ENCODE measurements at regions of chr18 and their contacts with region 1.

Region 1: DNA sequence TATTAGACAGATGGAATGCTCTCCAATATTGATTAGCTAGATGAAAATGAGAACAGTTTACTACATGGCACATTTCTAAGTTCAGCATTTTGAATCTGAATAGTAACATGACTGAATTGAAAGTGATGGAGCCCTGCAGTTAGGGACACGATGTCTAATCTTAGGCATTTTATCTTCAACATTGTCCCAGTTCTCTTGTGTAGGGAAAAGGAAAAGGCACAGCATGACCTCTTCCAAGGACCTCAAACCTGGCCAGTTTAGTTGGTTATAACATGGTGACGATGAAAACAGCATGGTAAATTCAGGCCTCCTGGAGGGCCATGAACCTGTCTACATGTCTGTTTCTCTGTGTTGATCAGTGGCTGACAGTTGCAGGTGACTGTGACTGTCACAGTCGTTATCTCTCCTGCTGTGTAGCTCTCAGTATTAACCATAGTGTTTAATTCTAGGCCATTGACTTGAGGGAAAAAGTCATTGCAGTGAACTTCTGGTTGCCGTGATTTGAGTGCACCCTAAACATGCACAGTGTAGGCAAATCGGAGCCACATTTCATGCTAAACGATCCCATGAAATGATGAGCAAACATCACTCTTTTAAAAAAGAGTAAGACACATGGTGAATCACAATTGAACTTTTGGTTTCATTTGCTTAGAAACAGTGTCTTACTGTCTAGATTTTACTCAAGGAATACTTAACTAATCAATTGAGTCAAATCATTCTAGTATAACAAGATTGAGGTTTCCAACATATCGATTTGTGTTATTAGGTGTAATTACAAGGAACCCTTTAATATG is 129.7 kb downstream of the PHLPP1 start:
- DNase-seq: no peak
- ATAC-seq: peak; percentile 77
- H3K4me3 ChIP-seq: peak overlapping the region; percentile 48; the same call in 1 of the 2 replicates
- H3K27ac ChIP-seq: peak overlapping the region; percentile 59
- H3K4me1 ChIP-seq: peaks cover 17% of the 10 kb centered on the region
- H3K27me3 ChIP-seq: no peaks in the 10 kb centered on the region
- CTCF ChIP-seq: no peak
- EP300 ChIP-seq: no peak
- POLR2A ChIP-seq: no peak
- RAD21 ChIP-seq: no peak

Region 2: GRCh38 chr18:63111671-63112402 is 266.8 kb after region 1 on chr18:
- CTCF ChIA-PET with region 1: no interaction called
- POLR2A ChIA-PET with region 1: interaction called, 10 read pairs
- RAD21 ChIA-PET with region 1: no interaction called
- SMC1A ChIA-PET with region 1: no interaction called
- in situ Hi-C with region 1: no loop called
- intact Hi-C with region 1: no loop called
- DNase-seq: no peak
- ATAC-seq: peak; percentile 65
- H3K4me3 ChIP-seq: no peak overlapping the region
- H3K27ac ChIP-seq: no peak overlapping the region
- H3K4me1 ChIP-seq: peaks cover 14% of the 10 kb centered on the region
- H3K27me3 ChIP-seq: no peaks in the 10 kb centered on the region
- CTCF ChIP-seq: no peak
- EP300 ChIP-seq: no peak
- POLR2A ChIP-seq: no peak
- RAD21 ChIP-seq: no peak

Region 3: DNA sequence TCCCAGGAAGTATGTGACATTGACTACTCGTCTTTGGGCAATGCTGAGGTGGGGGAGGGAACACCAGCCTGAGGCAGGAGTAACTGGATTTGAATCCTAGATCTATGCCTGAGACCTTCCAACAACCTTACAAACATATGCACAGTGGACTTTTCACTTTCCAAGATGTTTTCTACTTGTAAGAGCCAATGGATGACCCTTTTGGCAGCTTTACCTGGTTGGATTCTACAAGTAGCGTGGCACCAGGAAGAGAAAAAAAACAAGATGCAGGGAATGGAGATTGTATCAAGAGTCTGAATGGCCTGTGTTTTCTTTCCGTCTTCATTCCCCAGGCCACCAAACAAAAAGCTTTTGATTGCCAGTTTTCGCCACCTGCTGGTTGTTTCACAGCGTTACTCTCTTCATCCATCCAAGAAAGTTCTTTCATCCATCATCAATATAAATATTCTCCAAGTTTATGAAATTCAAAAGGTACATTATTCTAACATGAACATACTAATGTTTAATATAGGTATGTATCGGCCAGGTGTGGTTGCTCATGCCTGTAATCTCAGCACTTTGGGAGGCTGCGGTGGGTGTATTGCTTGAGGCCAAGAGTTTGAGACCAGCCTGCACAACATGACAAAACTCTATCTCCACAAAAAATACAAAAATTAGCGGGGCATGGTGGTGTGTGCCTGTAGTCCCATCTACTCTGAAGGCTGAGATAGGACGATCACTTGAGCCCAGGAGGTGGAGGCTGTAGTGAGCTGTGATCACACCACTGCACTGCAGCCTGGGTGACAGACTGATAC is 478.0 kb after region 1 on chr18:
- CTCF ChIA-PET with region 1: no interaction called
- POLR2A ChIA-PET with region 1: no interaction called
- RAD21 ChIA-PET with region 1: no interaction called
- SMC1A ChIA-PET with region 1: no interaction called
- in situ Hi-C with region 1: no loop called
- intact Hi-C with region 1: no loop called
- DNase-seq: no peak
- ATAC-seq: peak; percentile 26
- H3K4me3 ChIP-seq: no peak overlapping the region
- H3K27ac ChIP-seq: peak overlapping the region; percentile 75
- H3K4me1 ChIP-seq: peaks cover 20% of the 10 kb centered on the region
- H3K27me3 ChIP-seq: no peaks in the 10 kb centered on the region
- CTCF ChIP-seq: peak; percentile 65 to 80 (median 70)
- EP300 ChIP-seq: no peak
- POLR2A ChIP-seq: no peak
- RAD21 ChIP-seq: peak; percentile 90

Measured in GM12878 (cell line).